ENCODE measurements at regions of chr2 and their contacts with region 1.

Region 1: GRCh38 chr2:100391735-100392515 is 25.5 kb downstream of the CHST10 start:
- DNase-seq: no peak
- ATAC-seq: no peak
- H3K4me3 ChIP-seq: no peak overlapping the region
- H3K27ac ChIP-seq: no peak overlapping the region
- H3K4me1 ChIP-seq: peaks cover 1% of the 10 kb centered on the region; the same call in 1 of the 2 replicates
- H3K27me3 ChIP-seq: peaks cover 7% of the 10 kb centered on the region
- CTCF ChIP-seq: no peak
- POLR2A ChIP-seq: no peak
- RAD21 ChIP-seq: no peak

Region 2: DNA sequence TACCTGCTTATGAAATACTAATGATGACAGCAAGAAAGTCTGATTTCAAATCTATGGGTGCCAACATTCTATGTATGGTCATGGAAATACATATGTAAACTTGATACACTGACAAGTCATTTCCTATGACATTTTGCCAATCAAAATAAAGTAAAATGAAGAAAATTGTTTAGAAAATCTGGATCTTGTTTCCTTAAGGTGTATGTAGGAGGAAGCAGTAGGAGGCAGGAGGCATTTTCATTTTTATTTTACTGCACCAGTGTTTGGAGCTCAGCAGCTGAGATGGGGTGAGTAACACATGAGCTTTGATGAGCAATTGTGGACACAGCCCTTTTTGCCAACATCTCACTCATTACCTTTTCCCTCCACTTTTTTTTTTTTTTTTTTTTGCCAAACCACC is 416.5 kb before region 1 on chr2:
- CTCF ChIA-PET with region 1: no interaction called
- POLR2A ChIA-PET with region 1: no interaction called
- dilution Hi-C with region 1: no loop called
- in situ Hi-C with region 1: no loop called
- intact Hi-C with region 1: no loop called
- DNase-seq: peak; percentile 87
- ATAC-seq: peak; percentile 68
- H3K4me3 ChIP-seq: no peak overlapping the region
- H3K27ac ChIP-seq: no peak overlapping the region
- H3K4me1 ChIP-seq: peaks cover 28% of the 10 kb centered on the region
- H3K27me3 ChIP-seq: no peaks in the 10 kb centered on the region
- CTCF ChIP-seq: no peak
- POLR2A ChIP-seq: no peak
- RAD21 ChIP-seq: no peak

Region 3: DNA sequence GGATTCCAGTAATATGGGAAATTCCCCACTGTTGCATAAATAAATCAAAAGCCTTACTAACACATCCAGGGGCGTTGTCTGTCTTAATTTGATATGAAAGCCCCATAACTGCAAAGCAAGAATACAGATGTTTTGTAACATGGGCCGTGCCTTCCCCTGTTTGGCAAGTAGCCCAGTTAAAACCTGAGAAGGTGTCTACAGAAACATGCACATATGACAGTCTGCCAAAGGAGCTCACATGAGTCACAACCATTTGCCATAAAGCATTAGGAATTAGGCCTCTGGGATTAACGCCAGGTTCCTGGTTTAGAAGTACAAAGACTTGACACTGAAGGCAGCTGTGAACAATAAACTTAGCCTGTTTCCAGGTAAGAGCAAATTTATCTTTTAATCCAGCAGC is 26.5 kb before region 1 on chr2:
- CTCF ChIA-PET with region 1: no interaction called
- POLR2A ChIA-PET with region 1: no interaction called
- dilution Hi-C with region 1: no loop called
- in situ Hi-C with region 1: no loop called
- intact Hi-C with region 1: loop called (anchors 1 kb)
- DNase-seq: peak; percentile 93
- ATAC-seq: no peak
- H3K4me3 ChIP-seq: no peak overlapping the region
- H3K27ac ChIP-seq: no peak overlapping the region
- H3K4me1 ChIP-seq: no peaks in the 10 kb centered on the region
- H3K27me3 ChIP-seq: peaks cover 4% of the 10 kb centered on the region
- CTCF ChIP-seq: no peak
- POLR2A ChIP-seq: no peak
- RAD21 ChIP-seq: no peak

Region 4: DNA sequence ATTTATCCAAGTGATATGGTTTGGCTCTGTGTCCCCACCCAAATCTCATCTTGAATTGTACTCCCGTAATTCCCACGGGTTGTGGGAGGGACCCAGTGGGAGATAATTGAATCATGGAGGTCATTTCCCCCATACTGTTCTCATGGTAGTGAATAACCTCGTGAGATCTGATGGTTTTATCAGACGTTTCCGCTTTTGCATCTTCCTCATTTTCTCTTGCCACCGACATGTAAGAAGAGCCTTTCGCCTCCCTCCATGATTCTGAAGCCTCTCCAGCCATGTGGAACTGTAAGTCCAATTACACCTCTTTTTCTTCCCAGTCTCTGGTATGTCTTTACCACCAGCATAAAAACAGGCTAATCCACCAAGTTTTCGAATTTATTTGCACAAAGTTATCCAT is 45.8 kb after region 1 on chr2:
- CTCF ChIA-PET with region 1: no interaction called
- POLR2A ChIA-PET with region 1: no interaction called
- dilution Hi-C with region 1: no loop called
- in situ Hi-C with region 1: no loop called
- intact Hi-C with region 1: no loop called
- DNase-seq: no peak
- ATAC-seq: no peak
- H3K4me3 ChIP-seq: no peak overlapping the region
- H3K27ac ChIP-seq: no peak overlapping the region
- H3K4me1 ChIP-seq: no peaks in the 10 kb centered on the region
- H3K27me3 ChIP-seq: peaks cover 10% of the 10 kb centered on the region
- CTCF ChIP-seq: no peak
- POLR2A ChIP-seq: no peak
- RAD21 ChIP-seq: no peak

Region 5: GRCh38 chr2:100460904-100461530 is 69.1 kb after region 1 on chr2:
- CTCF ChIA-PET with region 1: no interaction called
- POLR2A ChIA-PET with region 1: no interaction called
- dilution Hi-C with region 1: no loop called
- in situ Hi-C with region 1: no loop called
- intact Hi-C with region 1: no loop called
- DNase-seq: no peak
- ATAC-seq: no peak
- H3K4me3 ChIP-seq: no peak overlapping the region
- H3K27ac ChIP-seq: no peak overlapping the region
- H3K4me1 ChIP-seq: no peaks in the 10 kb centered on the region
- H3K27me3 ChIP-seq: no peaks in the 10 kb centered on the region
- CTCF ChIP-seq: no peak
- POLR2A ChIP-seq: no peak
- RAD21 ChIP-seq: no peak

Measured in IMR-90 (cell line).